Activated T-helper 1 cell treated with anti-CD3 and anti-CD28 coated beads, Interleukin-12 subunit alpha, Interleukin-12 subunit beta, Interleukin-2, Interleukin-4 antibody, amounts not matched to agents 30 ng/mL and 10 ng/mL and 1 ng/mL, durations not matched to agents 14 hours and 24 hours and 36 hours (primary cell): ENCODE measurements at regions of chr1 and their contacts with region 1.

Region 1: GRCh38 chr1:107936498-107937481 is 28.2 kb downstream of the VAV3 start:
- DNase-seq: no peak
- H3K4me3 Mint-ChIP-seq: peak overlapping the region; percentile 70
- H3K27ac Mint-ChIP-seq: peak overlapping the region; percentile 83
- H3K4me1 Mint-ChIP-seq: peaks cover 57% of the 10 kb centered on the region
- H3K27me3 Mint-ChIP-seq: no peaks in the 10 kb centered on the region

Region 2: GRCh38 chr1:107782217-107782845 is 154.5 kb before region 1 on chr1:
- intact Hi-C with region 1: loop called (anchors 10 kb)
- DNase-seq: peak; percentile 16
- H3K4me3 Mint-ChIP-seq: no peak overlapping the region
- H3K27ac Mint-ChIP-seq: no peak overlapping the region
- H3K4me1 Mint-ChIP-seq: peaks cover 21% of the 10 kb centered on the region
- H3K27me3 Mint-ChIP-seq: no peaks in the 10 kb centered on the region

Region 3: DNA sequence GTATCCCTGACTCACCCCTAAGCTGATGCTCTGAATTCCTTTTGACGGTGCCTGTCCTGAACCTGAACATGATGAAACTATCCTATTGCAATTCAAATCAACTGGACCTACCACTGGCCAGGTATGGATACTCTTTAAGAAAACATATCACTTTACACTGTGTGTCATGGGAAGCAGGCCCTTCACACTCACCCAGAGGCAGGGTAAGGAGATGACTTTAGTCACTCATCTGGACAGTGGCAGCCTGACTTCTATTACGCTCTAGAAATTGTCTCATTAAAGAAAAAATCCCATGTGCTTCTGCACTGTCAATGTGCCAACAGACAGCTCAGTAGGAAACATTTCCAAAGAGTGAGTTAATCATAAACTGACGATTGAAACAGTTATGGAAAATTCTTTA is 66.1 kb before region 1 on chr1:
- intact Hi-C with region 1: loop called (anchors 2 kb)
- DNase-seq: no peak
- H3K4me3 Mint-ChIP-seq: no peak overlapping the region
- H3K27ac Mint-ChIP-seq: no peak overlapping the region
- H3K4me1 Mint-ChIP-seq: peaks cover 10% of the 10 kb centered on the region
- H3K27me3 Mint-ChIP-seq: no peaks in the 10 kb centered on the region

Region 4: DNA sequence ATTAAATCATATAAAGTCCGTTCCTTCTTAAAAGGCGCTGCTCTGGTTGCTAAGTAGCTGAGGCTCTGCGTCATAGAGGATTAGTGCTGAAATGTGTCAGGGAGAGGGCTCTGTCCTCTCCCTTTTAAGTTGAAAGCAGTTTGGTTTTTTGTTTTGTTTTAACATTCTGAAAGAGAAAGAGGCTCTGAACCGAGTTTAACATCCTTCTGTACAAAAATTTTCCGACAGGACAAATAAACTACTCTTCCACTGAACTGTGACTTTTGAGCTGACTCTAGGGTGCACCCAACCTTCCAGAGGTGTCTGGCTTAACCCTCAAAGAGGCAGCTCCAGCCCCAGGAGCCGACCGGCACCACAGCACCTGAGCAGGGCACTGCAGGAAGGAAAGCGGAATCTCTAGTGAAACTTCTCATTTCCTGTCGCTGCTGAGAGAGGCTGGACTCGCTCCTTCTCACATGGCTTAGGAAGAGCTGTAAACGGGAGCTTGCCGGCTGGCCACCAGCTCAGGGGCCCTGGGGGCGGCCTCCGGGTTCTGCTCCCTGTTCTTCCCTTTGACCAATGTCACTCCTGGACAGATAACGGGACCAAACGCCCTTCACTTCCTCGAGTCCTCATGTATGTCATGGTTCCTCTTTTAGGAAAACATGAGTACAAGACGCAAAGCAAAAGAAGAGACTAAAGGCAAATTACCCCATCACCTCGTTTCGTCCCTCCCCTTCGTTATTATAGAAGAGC is 27.0 kb after region 1 on chr1:
- intact Hi-C with region 1: loop called (anchors 1 kb)
- DNase-seq: peak; percentile 31
- H3K4me3 Mint-ChIP-seq: peak overlapping the region; percentile 90
- H3K27ac Mint-ChIP-seq: peak overlapping the region; percentile 84
- H3K4me1 Mint-ChIP-seq: peaks cover 28% of the 10 kb centered on the region
- H3K27me3 Mint-ChIP-seq: peaks cover 6% of the 10 kb centered on the region

Region 5: GRCh38 chr1:108053270-108054013 is 116.7 kb after region 1 on chr1:
- intact Hi-C with region 1: loop called (anchors 1 kb)
- DNase-seq: no peak
- H3K4me3 Mint-ChIP-seq: no peak overlapping the region
- H3K27ac Mint-ChIP-seq: no peak overlapping the region
- H3K4me1 Mint-ChIP-seq: peaks cover 6% of the 10 kb centered on the region
- H3K27me3 Mint-ChIP-seq: no peaks in the 10 kb centered on the region

Region 6: DNA sequence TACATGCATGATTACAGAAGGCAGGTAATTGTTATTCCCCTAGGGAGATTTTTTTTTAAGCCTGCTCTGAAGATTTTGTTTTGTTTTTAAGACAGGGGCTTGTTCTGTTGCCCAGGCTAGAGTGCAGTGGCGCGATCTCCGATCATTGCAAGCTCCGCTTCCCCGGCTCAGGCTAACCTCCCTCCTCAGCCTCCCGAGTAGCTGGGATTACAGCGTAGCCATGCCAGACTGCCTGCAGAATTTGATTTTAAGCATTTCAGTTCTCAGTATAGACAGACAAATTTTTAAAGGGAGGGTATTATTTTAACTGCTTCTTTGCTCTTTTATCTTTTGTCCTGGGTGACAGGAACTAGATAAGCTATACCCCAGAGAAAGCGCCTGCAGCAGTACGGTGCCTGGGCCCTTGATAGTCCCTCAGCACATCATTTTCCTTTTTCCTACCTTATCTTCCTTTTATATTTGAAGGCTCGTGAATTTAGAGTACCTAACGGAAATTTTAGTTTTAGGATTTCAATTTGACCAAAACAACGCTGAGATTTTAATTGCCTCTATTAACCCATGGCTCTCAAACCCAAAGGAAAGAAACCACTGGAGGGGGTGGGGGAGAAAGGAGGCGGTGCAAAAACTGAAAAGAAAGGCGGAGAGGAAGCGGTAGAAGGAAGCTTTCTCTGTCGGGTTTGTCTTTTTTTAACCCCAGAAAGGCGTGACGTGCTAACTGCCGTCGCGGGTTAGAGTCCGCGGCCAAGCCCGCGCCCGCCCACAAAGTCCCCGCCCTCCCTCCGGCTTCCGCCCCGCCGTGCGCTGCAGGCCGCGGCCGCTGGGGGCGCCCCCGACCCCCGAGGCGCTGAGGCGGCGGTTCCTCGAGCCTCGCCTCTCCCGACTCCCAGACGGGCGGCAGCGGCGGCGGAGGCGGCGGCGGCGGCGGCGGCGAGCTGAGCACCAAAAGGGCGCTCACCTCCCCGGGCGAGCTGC is 622.7 kb after region 1 on chr1 and contains the start of gene EEIG2:
- intact Hi-C with region 1: loop called (anchors 10 kb)
- DNase-seq: peak; percentile 85
- H3K4me3 Mint-ChIP-seq: peak within 1 kb of the TSS; percentile 92
- H3K27ac Mint-ChIP-seq: peak within 1 kb of the TSS; percentile 83
- H3K4me1 Mint-ChIP-seq: peaks cover 31% of the 10 kb centered on the region
- H3K27me3 Mint-ChIP-seq: peaks cover 4% of the 10 kb centered on the region
- total RNA-seq, gene EEIG2: 16.7 and 18.5 TPM in 2 replicates